A549 (cell line): ENCODE measurements at regions of chr21 and their contacts with region 1.

Region 1: DNA sequence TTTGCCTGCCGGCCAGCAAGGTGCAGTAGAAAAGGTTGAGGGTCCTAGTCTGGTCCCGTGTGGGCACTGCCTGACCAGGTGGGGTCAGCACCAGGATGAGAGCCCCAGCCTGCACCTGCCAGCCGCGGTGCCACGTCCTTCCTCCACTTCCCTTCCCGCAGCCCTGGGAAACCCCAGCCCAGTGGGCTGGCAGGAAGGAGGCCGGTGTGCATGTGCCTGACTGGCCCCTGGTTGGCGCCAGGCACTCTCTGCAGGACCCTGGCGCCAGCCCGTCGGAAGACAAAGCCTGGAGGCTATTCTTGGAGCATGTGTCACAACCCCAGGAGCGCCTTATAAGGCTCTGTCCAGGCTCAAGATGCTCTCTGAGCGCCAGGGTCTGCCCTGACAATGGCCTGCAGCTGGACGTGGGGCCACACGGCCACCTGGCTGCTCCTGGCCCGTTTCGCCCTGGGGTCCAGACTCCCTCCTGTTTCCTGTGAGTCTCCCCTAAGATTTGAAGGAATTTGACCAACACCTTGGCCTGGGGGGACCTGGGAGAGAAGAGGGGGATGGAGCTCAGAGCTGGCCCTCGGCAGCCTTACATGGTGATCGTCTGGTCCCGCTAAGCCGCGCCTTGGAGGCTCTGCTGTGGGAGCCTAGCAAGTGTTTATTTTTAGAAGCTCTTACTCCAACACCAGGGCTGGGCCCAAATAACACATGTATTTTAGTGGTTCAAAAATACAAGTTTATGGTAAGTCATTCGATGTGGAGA is 31.9 kb upstream of the POFUT2 start:
- DNase-seq: peak in 1 of 2 experiments; percentile 68
- ATAC-seq: peak; percentile 30 to 71
- H3K4me3 ChIP-seq: no peak overlapping the region
- H3K27ac ChIP-seq: peak overlapping the region; percentile 97 to 100
- H3K4me1 ChIP-seq: peaks cover 77% of the 10 kb centered on the region
- CTCF ChIP-seq: no peak
- EP300 ChIP-seq: no peak
- POLR2A ChIP-seq: no peak
- RAD21 ChIP-seq: no peak

Region 2: GRCh38 chr21:45309069-45309986 is 10.3 kb before region 1 on chr21:
- CTCF ChIA-PET with region 1: interaction called, 15 read pairs
- POLR2A ChIA-PET with region 1: interaction called, 3 read pairs
- DNase-seq: peak; percentile 42 to 55
- ATAC-seq: peak; percentile 89 to 94
- H3K4me3 ChIP-seq: no peak overlapping the region
- H3K27ac ChIP-seq: peak overlapping the region; percentile 69 to 85
- H3K4me1 ChIP-seq: peaks cover 19% of the 10 kb centered on the region
- CTCF ChIP-seq: peak; percentile 57; the same call in 2 of the 3 replicates
- EP300 ChIP-seq: no peak
- POLR2A ChIP-seq: no peak
- RAD21 ChIP-seq: peak; percentile 28 to 57; a peak in 3 of 5 replicates